Ascending aorta (tissue), 2 donors: ENCODE measurements at regions of chr2 and their contacts with region 1.

Region 1: GRCh38 chr2:207166039-207166348 is 246 bp upstream of the KLF7 start:
- DNase-seq: peak; percentile 99 to 100
- H3K4me3 ChIP-seq: peak overlapping the region; percentile 79 to 95
- H3K27ac ChIP-seq: peak overlapping the region; percentile 100
- H3K4me1 ChIP-seq: peaks cover 6 to 16% of the 10 kb centered on the region in 2 donors
- H3K27me3 ChIP-seq: no peaks in the 10 kb centered on the region
- CTCF ChIP-seq: no peak

Region 2: DNA sequence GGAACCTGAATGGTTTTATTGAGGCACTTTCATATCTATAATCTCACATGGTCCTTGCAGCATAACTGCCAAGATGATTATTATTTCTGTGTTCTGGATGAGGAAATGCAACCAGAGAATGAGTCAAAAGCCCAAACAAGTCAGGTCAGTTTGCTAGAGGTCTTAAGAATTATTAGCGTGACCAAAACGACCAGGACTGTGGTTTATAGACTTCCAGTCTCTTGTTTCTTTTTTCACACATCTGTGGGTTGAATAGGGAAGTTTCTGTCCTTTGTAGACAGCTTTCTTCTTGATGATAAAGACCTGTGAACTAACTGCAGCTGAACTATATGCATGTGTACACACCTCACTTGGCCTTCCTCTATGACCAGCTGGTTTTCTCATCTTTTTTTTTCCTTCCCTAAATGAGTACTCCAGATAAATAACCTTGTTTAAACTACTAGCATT is 708.8 kb before region 1 on chr2:
- intact Hi-C with region 1: no loop called
- DNase-seq: no peak
- H3K4me3 ChIP-seq: no peak overlapping the region
- H3K27ac ChIP-seq: no peak overlapping the region
- H3K4me1 ChIP-seq: no peaks in the 10 kb centered on the region
- H3K27me3 ChIP-seq: no peaks in the 10 kb centered on the region
- CTCF ChIP-seq: no peak

Region 3: GRCh38 chr2:206981739-206982340 is 184.2 kb before region 1 on chr2:
- intact Hi-C with region 1: loop called (anchors 2 kb)
- DNase-seq: peak; percentile 29 to 88
- H3K4me3 ChIP-seq: no peak overlapping the region
- H3K27ac ChIP-seq: no peak overlapping the region
- H3K4me1 ChIP-seq: peaks cover 0 to 13% of the 10 kb centered on the region in 2 donors
- H3K27me3 ChIP-seq: no peaks in the 10 kb centered on the region
- CTCF ChIP-seq: peak; percentile 74 to 88 (median 80)

Region 4: DNA sequence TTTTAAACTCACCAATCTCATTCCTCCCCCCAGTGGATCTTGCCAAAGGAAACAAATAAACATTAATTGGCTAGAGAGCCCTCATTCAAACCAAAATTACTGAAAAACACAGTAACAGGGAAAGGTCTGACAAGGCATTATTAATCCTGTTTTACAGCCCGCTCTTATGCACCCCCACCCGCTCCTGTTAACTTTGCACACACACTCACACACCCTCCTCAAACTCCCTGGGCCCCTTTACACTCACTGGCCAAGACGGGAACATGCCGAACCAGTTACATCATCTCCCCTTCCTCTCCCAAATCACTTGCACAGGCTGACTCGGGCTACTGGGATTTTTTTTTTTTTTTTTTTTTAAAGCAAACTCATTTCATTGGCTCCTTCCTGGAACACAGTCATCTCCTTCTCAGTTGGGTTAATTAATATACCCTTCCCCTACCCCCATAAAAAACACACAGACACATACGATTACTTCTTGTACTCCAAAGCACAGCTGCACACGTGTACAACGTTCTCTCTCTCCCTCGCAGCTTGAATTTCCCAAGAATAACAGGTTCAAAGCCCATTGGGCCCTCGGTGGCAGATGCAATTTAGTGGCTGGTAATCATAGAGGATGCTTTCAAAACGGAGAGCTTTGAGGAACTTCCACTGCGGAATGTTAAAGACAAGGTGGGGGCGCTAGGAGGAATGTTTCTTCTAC is 32.0 kb before region 1 on chr2:
- intact Hi-C with region 1: loop called (anchors 1 kb)
- DNase-seq: peak; percentile 61 to 95
- H3K4me3 ChIP-seq: peak overlapping the region in 1 of 2 donors; percentile 33
- H3K27ac ChIP-seq: peak overlapping the region; percentile 82 to 89
- H3K4me1 ChIP-seq: peaks cover 12 to 74% of the 10 kb centered on the region in 2 donors
- H3K27me3 ChIP-seq: no peaks in the 10 kb centered on the region
- CTCF ChIP-seq: no peak

Region 5: GRCh38 chr2:207238831-207239701 is 73.1 kb after region 1 on chr2:
- intact Hi-C with region 1: loop called (anchors 2 kb)
- DNase-seq: peak; percentile 70 to 92
- H3K4me3 ChIP-seq: no peak overlapping the region
- H3K27ac ChIP-seq: peak overlapping the region; percentile 78 to 84
- H3K4me1 ChIP-seq: peaks cover 12 to 21% of the 10 kb centered on the region in 2 donors
- H3K27me3 ChIP-seq: no peaks in the 10 kb centered on the region
- CTCF ChIP-seq: no peak

Region 6: GRCh38 chr2:207473049-207473930 is 307.3 kb after region 1 on chr2:
- intact Hi-C with region 1: loop called (anchors 5 kb)
- DNase-seq: peak in 1 of 2 donors; percentile 70
- H3K4me3 ChIP-seq: peak overlapping the region in 1 of 2 donors; percentile 52
- H3K27ac ChIP-seq: peak overlapping the region in 1 of 2 donors; percentile 7
- H3K4me1 ChIP-seq: peaks cover 0 to 3% of the 10 kb centered on the region in 2 donors
- H3K27me3 ChIP-seq: no peaks in the 10 kb centered on the region
- CTCF ChIP-seq: peak; percentile 45 to 80 (median 58)